Activated CD8-positive, alpha-beta T cell treated with anti-CD3 and anti-CD28 coated beads for 36 hours (primary cell): ENCODE measurements at regions of chr10 and their contacts with region 1.

Region 1: GRCh38 chr10:101095542-101096213 is 33.9 kb downstream of the KAZALD1 start:
- DNase-seq: peak; percentile 89
- ATAC-seq: peak; percentile 100
- H3K4me3 Mint-ChIP-seq: no peak overlapping the region
- H3K27ac Mint-ChIP-seq: no peak overlapping the region
- H3K4me1 Mint-ChIP-seq: peaks cover 3% of the 10 kb centered on the region
- H3K27me3 Mint-ChIP-seq: peaks cover 32% of the 10 kb centered on the region
- CTCF ChIP-seq: peak; percentile 71

Region 2: DNA sequence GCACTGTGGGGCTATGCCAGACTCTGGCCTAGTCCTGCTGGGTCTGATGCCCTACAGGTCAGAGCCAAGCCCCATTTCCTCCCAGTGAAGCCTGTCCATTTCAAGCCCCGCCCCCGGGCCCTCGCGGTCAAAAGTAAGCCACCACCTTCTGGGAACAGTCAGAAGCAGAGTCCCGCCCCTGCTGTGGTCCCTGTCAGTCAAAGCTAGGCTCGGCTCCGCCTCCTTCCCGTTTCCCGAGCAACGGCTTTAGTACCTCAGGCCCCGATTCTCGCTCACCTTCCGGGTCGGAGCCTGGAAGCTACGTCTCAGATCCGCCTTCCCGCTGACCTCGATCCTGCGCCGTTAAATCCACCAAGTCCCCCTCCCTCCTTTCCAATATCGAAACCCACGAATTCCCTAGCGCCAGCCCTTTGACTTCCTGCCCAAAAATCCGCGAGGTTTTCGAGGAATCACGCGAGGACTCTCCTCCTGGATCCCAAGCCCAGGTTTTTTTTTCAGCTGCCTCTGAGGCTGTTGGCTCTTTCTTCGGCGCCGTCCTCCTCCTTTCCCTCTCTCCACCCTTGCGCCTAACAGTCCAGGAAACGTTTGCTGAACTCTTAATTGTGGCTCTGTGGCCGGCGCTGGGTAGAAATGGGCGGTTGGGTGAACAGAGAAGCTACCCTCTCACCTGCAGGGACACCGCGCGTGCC is 52.9 kb before region 1 on chr10:
- CTCF ChIA-PET with region 1: interaction called, 25 read pairs
- POLR2A ChIA-PET with region 1: no interaction called
- intact Hi-C with region 1: no loop called
- DNase-seq: peak; percentile 98
- ATAC-seq: peak; percentile 96
- H3K4me3 Mint-ChIP-seq: peak overlapping the region; percentile 80
- H3K27ac Mint-ChIP-seq: peak overlapping the region; percentile 81
- H3K4me1 Mint-ChIP-seq: peaks cover 21% of the 10 kb centered on the region
- H3K27me3 Mint-ChIP-seq: peaks cover 17% of the 10 kb centered on the region
- CTCF ChIP-seq: no peak

Region 3: GRCh38 chr10:101050208-101051069 is 45.2 kb before region 1 on chr10:
- CTCF ChIA-PET with region 1: interaction called, 26 read pairs
- POLR2A ChIA-PET with region 1: no interaction called
- intact Hi-C with region 1: no loop called
- DNase-seq: peak; percentile 83
- ATAC-seq: peak; percentile 97
- H3K4me3 Mint-ChIP-seq: no peak overlapping the region
- H3K27ac Mint-ChIP-seq: no peak overlapping the region
- H3K4me1 Mint-ChIP-seq: peaks cover 9% of the 10 kb centered on the region
- H3K27me3 Mint-ChIP-seq: peaks cover 48% of the 10 kb centered on the region
- CTCF ChIP-seq: peak; percentile 88

Region 4: DNA sequence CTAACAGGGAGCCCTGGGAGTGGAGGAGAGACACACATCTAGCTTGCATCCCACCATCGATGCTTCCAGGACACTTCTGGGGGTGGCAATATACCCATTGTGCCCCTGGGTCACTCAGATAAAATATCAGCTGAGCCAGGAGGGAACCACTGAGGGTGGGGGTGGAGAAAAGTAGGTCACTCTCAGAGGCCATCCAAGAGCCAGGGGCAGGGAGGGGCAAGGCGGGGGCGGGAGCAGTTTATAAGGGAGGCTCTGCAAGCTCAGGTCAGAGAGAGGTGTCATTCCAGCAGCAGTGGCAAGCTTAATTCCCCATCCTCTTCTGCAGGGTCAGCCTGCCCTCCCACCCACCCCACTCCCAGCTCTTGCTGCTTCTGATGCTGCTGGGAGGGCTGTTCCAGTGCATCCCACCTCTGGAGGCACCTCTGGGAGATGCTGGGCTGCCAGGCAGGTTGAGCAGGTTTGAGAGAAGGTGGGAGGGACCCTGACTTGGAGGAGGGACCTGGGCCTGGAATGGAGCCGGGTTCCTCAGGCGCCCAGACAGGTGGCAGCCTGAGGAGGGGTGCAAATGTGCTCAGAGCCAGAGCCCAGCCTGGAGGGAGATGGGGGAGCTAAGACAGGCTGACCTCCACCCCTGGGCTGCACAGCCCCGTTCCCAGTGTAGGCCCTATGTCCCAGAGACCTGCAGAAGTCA is 15.3 kb after region 1 on chr10:
- CTCF ChIA-PET with region 1: interaction called, 36 read pairs
- POLR2A ChIA-PET with region 1: no interaction called
- intact Hi-C with region 1: no loop called
- DNase-seq: no peak
- ATAC-seq: no peak
- H3K4me3 Mint-ChIP-seq: no peak overlapping the region
- H3K27ac Mint-ChIP-seq: no peak overlapping the region
- H3K4me1 Mint-ChIP-seq: no peaks in the 10 kb centered on the region
- H3K27me3 Mint-ChIP-seq: peaks cover 27% of the 10 kb centered on the region
- CTCF ChIP-seq: no peak

Region 5: GRCh38 chr10:101120884-101121653 is 25.4 kb after region 1 on chr10:
- CTCF ChIA-PET with region 1: interaction called, 32 read pairs
- POLR2A ChIA-PET with region 1: no interaction called
- intact Hi-C with region 1: no loop called
- DNase-seq: peak; percentile 58
- ATAC-seq: peak; percentile 77
- H3K4me3 Mint-ChIP-seq: peak overlapping the region; percentile 73
- H3K27ac Mint-ChIP-seq: peak overlapping the region; percentile 52
- H3K4me1 Mint-ChIP-seq: peaks cover 26% of the 10 kb centered on the region
- H3K27me3 Mint-ChIP-seq: peaks cover 45% of the 10 kb centered on the region
- CTCF ChIP-seq: no peak

Region 6: GRCh38 chr10:101130984-101131961 is 35.6 kb after region 1 on chr10 and contains the start of gene TLX1:
- CTCF ChIA-PET with region 1: interaction called, 12 read pairs
- POLR2A ChIA-PET with region 1: no interaction called
- intact Hi-C with region 1: no loop called
- DNase-seq: no peak
- ATAC-seq: no peak
- H3K4me3 Mint-ChIP-seq: peak within 1 kb of the TSS; percentile 6
- H3K27ac Mint-ChIP-seq: no peak within 1 kb of the TSS
- H3K4me1 Mint-ChIP-seq: peaks cover 28% of the 10 kb centered on the region
- H3K27me3 Mint-ChIP-seq: peaks cover 78% of the 10 kb centered on the region
- CTCF ChIP-seq: no peak
- total RNA-seq, gene TLX1: not detected